Activated naive CD4-positive, alpha-beta T cell treated with anti-CD3 and anti-CD28 coated beads for 36 hours (primary cell): ENCODE measurements at regions of chr5 and their contacts with region 1.

Region 1: GRCh38 chr5:150129813-150130492 is 25.7 kb downstream of the PDGFRB start:
- DNase-seq: peak; percentile 67
- H3K4me3 Mint-ChIP-seq: no peak overlapping the region
- H3K27ac Mint-ChIP-seq: no peak overlapping the region
- H3K4me1 Mint-ChIP-seq: no peaks in the 10 kb centered on the region
- H3K27me3 Mint-ChIP-seq: no peaks in the 10 kb centered on the region

Region 2: GRCh38 chr5:150161242-150162141 is 31.5 kb after region 1 on chr5:
- CTCF ChIA-PET with region 1: interaction called, 10 read pairs
- intact Hi-C with region 1: no loop called
- DNase-seq: peak; percentile 87
- H3K4me3 Mint-ChIP-seq: no peak overlapping the region
- H3K27ac Mint-ChIP-seq: no peak overlapping the region
- H3K4me1 Mint-ChIP-seq: no peaks in the 10 kb centered on the region
- H3K27me3 Mint-ChIP-seq: peaks cover 17% of the 10 kb centered on the region

Region 3: DNA sequence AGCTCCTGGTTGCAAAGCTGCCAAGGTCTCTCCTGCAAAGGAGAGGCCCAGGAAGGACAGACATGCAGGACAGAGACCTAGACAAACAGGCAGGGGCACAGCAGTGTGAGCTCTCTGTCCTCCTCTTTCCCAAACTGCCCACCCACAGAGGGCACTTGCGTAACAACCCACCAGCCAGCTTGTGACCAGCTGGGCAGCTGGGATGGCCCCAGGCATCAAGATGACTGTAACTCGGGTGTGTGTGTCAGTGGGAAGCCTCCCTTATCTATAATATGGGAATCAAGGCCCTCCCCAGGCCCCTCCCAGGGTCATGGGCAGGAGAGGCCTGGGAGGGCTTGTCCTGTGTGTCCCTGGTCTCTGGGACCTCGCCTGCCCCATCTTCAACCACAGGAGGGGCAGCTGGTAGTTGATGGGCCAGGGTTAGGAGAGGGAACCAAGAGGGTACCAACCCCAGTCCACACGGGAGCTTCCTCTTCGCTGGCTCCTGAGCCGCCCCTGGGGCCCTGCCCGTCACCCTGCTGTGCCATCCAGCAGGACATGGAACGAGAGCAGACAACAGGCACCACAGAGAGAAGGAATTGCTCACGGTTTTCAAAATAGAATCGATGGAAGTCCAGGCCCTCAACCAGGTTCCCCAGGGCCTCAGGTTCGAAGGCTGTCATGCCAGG is 97.8 kb after region 1 on chr5:
- CTCF ChIA-PET with region 1: no interaction called
- intact Hi-C with region 1: no loop called
- DNase-seq: no peak
- H3K4me3 Mint-ChIP-seq: no peak overlapping the region
- H3K27ac Mint-ChIP-seq: no peak overlapping the region
- H3K4me1 Mint-ChIP-seq: no peaks in the 10 kb centered on the region
- H3K27me3 Mint-ChIP-seq: no peaks in the 10 kb centered on the region

Region 4: GRCh38 chr5:150412319-150413175 is 282.6 kb after region 1 on chr5 and contains the start of gene CD74:
- CTCF ChIA-PET with region 1: no interaction called
- intact Hi-C with region 1: no loop called
- DNase-seq: peak; percentile 98
- H3K4me3 Mint-ChIP-seq: peak within 1 kb of the TSS; percentile 98
- H3K27ac Mint-ChIP-seq: peak within 1 kb of the TSS; percentile 98
- H3K4me1 Mint-ChIP-seq: peaks cover 39% of the 10 kb centered on the region
- H3K27me3 Mint-ChIP-seq: no peaks in the 10 kb centered on the region
- total RNA-seq, gene CD74: 312 to 316 TPM